GM12878 (cell line): ENCODE measurements at regions of chr18 and their contacts with region 1.

Region 1: DNA sequence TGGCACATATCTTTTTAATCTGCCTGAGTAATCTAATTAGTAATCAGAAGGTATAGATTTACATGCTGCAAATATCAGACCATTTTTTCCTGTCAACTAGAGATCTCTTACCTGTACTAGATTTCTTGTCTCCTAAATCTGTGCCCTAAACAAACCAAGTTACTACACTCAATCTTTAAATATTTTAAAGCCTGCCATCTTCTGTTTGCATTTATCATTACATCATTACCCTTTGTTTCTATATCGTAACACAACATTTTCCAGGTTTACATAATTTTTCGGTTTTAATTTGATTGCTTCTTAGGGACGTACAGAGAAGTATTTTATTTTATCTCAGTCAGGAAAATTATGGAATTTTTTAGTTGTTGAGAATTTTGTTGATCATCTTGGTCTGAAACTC is 25.7 kb downstream of the PSMA8 start:
- DNase-seq: no peak
- ATAC-seq: peak; percentile 61
- H3K4me3 ChIP-seq: no peak overlapping the region
- H3K27ac ChIP-seq: no peak overlapping the region
- H3K4me1 ChIP-seq: no peaks in the 10 kb centered on the region
- H3K27me3 ChIP-seq: no peaks in the 10 kb centered on the region
- CTCF ChIP-seq: peak in 2 of 3 experiments; percentile 2 to 10; a peak in 1 of 6 replicates
- EP300 ChIP-seq: no peak
- POLR2A ChIP-seq: no peak
- RAD21 ChIP-seq: peak; percentile 29

Region 2: DNA sequence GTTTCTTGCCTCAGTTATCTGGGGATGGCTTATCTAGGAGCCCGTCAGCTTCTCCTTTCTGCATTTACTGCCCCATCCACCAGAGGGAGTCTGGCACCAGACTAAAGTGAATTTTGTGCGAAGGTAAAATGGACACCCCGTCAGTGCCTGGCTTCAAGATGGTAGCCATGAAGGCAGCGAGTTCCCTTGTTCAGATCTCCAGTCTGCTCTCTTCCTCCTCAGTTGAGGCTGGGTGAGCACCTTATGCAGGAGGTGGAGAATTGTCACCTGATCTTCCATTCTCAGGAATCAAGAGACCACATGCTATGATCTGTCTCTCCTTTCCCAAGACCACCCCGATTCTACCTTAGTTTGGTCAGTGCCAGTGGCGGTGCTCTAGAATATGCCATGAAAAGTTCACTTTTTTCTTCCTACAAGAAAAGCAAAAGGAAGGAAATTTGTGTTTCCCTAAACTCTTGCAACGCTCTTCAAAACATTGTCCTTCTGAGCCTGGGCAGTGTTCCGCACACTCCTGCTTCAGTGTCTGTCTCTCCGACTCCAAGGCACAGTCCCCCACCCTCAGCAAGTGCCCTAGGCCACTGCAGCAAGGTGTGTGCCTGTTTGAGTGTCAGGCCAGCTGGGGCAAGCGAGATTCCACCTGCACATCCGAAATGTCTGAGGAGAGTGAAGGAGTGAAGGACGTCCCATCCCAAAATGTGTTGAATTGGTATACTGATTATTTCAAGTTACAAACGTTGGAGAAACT is 237.5 kb before region 1 on chr18:
- CTCF ChIA-PET with region 1: interaction called, 11 read pairs
- POLR2A ChIA-PET with region 1: no interaction called
- RAD21 ChIA-PET with region 1: interaction called, 13 read pairs
- SMC1A ChIA-PET with region 1: interaction called, 8 read pairs
- in situ Hi-C with region 1: loop called (anchors 10 kb)
- intact Hi-C with region 1: loop called (anchors 1 kb)
- DNase-seq: peak; percentile 20
- ATAC-seq: peak; percentile 97
- H3K4me3 ChIP-seq: no peak overlapping the region
- H3K27ac ChIP-seq: no peak overlapping the region
- H3K4me1 ChIP-seq: no peaks in the 10 kb centered on the region
- H3K27me3 ChIP-seq: no peaks in the 10 kb centered on the region
- CTCF ChIP-seq: peak; percentile 75 to 84 (median 77)
- EP300 ChIP-seq: no peak
- POLR2A ChIP-seq: no peak
- RAD21 ChIP-seq: peak; percentile 96

Region 3: DNA sequence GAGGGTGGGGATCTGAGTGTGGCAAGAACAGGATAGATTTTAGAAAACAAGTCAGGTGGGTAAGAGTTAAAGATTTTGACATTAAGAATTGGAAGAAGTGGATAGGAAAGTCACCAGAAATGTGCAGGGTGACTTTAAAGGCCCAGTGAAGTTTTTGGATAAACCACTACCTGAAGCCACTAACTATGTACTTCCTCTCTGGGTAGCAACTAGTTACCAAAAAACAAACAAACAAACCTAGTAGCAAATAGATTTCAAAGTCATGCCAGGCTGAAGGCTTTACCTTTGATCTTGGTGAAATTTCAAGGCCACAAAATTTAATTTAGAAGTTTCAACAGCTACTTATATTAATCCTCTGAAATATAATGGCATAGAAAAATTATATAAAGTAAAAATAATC is 16.8 kb after region 1 on chr18:
- CTCF ChIA-PET with region 1: interaction called, 23 read pairs
- POLR2A ChIA-PET with region 1: no interaction called
- RAD21 ChIA-PET with region 1: no interaction called
- SMC1A ChIA-PET with region 1: interaction called, 14 read pairs
- in situ Hi-C with region 1: no loop called
- intact Hi-C with region 1: no loop called
- DNase-seq: no peak
- ATAC-seq: peak; percentile 63
- H3K4me3 ChIP-seq: no peak overlapping the region
- H3K27ac ChIP-seq: no peak overlapping the region
- H3K4me1 ChIP-seq: no peaks in the 10 kb centered on the region
- H3K27me3 ChIP-seq: no peaks in the 10 kb centered on the region
- CTCF ChIP-seq: no peak
- EP300 ChIP-seq: no peak
- POLR2A ChIP-seq: no peak
- RAD21 ChIP-seq: no peak

Region 4: DNA sequence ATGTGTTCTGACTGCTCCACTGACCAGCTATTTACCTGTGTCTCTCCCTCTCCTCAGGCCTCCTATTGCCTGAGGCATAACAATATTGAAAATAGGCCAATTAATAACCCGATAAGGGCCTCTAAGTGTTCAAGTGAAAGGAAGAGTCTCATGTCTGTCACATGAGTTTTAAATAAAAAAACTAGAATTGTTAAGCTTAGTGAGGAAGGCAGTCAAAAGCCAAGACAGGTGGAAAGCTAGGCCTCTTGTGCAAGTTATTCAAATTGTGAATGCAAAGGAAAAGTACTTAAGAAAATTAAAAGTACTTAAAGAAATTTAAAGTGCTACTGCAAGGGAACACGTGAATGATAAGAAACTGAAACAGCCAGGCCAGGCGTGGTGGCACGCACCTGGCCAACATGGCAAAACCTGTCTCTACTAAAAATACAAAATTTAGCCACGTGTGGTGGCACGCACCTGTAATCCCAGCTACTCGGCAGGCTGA is 22.0 kb after region 1 on chr18:
- CTCF ChIA-PET with region 1: interaction called, 6 read pairs
- POLR2A ChIA-PET with region 1: interaction called, 3 read pairs
- RAD21 ChIA-PET with region 1: interaction called, 4 read pairs
- SMC1A ChIA-PET with region 1: interaction called, 13 read pairs
- in situ Hi-C with region 1: no loop called
- intact Hi-C with region 1: no loop called
- DNase-seq: peak; percentile 51
- ATAC-seq: peak; percentile 75
- H3K4me3 ChIP-seq: no peak overlapping the region
- H3K27ac ChIP-seq: peak overlapping the region; percentile 56
- H3K4me1 ChIP-seq: peaks cover 19% of the 10 kb centered on the region; the same call in 1 of the 2 replicates
- H3K27me3 ChIP-seq: no peaks in the 10 kb centered on the region
- CTCF ChIP-seq: no peak
- EP300 ChIP-seq: no peak
- POLR2A ChIP-seq: no peak
- RAD21 ChIP-seq: no peak

Region 5: GRCh38 chr18:26317398-26317797 is 158.0 kb after region 1 on chr18:
- CTCF ChIA-PET with region 1: no interaction called
- POLR2A ChIA-PET with region 1: no interaction called
- RAD21 ChIA-PET with region 1: no interaction called
- SMC1A ChIA-PET with region 1: no interaction called
- in situ Hi-C with region 1: no loop called
- intact Hi-C with region 1: no loop called
- DNase-seq: no peak
- ATAC-seq: no peak
- H3K4me3 ChIP-seq: no peak overlapping the region
- H3K27ac ChIP-seq: no peak overlapping the region
- H3K4me1 ChIP-seq: no peaks in the 10 kb centered on the region
- H3K27me3 ChIP-seq: no peaks in the 10 kb centered on the region
- CTCF ChIP-seq: no peak
- EP300 ChIP-seq: no peak
- POLR2A ChIP-seq: no peak
- RAD21 ChIP-seq: no peak